GM12878 (cell line): ENCODE measurements at regions of chr1 and their contacts with region 1.

Region 1: GRCh38 chr1:235843461-235843961 is 23.2 kb downstream of the LYST start:
- DNase-seq: no peak
- ATAC-seq: peak; percentile 82
- H3K4me3 ChIP-seq: no peak overlapping the region
- H3K27ac ChIP-seq: no peak overlapping the region
- H3K4me1 ChIP-seq: peaks cover 7% of the 10 kb centered on the region
- H3K27me3 ChIP-seq: no peaks in the 10 kb centered on the region
- CTCF ChIP-seq: peak; percentile 66 to 75 (median 66)
- EP300 ChIP-seq: no peak
- POLR2A ChIP-seq: no peak
- RAD21 ChIP-seq: peak; percentile 69

Region 2: GRCh38 chr1:235504496-235505222 is 338.9 kb before region 1 on chr1:
- CTCF ChIA-PET with region 1: interaction called, 8 read pairs
- POLR2A ChIA-PET with region 1: interaction called, 13 read pairs
- RAD21 ChIA-PET with region 1: interaction called, 14 read pairs
- SMC1A ChIA-PET with region 1: interaction called, 6 read pairs
- in situ Hi-C with region 1: no loop called
- intact Hi-C with region 1: loop called (anchors 5 kb)
- DNase-seq: peak; percentile 96
- ATAC-seq: peak; percentile 86
- H3K4me3 ChIP-seq: peak overlapping the region; percentile 92
- H3K27ac ChIP-seq: peak overlapping the region; percentile 95
- H3K4me1 ChIP-seq: peaks cover 6% of the 10 kb centered on the region
- H3K27me3 ChIP-seq: no peaks in the 10 kb centered on the region
- CTCF ChIP-seq: peak; percentile 82 to 91 (median 86)
- EP300 ChIP-seq: peak in 1 of 2 experiments; percentile 51; a peak in 1 of 4 replicates
- POLR2A ChIP-seq: peak; percentile 86
- RAD21 ChIP-seq: peak; percentile 48; the same call in 1 of the 2 replicates

Region 3: DNA sequence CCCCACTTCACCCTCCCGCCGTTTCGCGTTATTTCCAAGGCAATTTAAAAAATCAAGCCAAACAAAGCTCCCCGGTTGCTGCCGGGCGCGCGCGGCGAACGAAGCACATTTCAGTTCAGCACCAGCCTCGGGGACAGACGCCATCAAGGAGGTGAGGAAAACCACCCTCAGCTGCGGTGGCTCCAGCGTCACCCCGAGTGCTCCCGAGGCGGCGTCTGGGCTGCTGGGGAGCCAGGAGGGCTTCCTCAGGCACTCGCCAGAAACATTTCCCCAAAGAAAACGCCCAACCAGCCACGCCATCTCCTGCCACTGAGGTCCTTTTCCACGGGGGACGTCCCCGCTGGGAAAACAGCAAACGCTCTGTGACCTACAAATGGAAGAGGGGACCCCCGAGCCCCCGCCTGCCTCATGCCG is 194.6 kb before region 1 on chr1:
- CTCF ChIA-PET with region 1: no interaction called
- POLR2A ChIA-PET with region 1: no interaction called
- RAD21 ChIA-PET with region 1: interaction called, 3 read pairs
- SMC1A ChIA-PET with region 1: no interaction called
- in situ Hi-C with region 1: no loop called
- intact Hi-C with region 1: loop called (anchors 5 kb)
- DNase-seq: no peak
- ATAC-seq: peak; percentile 82
- H3K4me3 ChIP-seq: peak overlapping the region; percentile 63; the same call in 1 of the 2 replicates
- H3K27ac ChIP-seq: no peak overlapping the region
- H3K4me1 ChIP-seq: no peaks in the 10 kb centered on the region; the same call in 1 of the 2 replicates
- H3K27me3 ChIP-seq: peaks cover 1 to 19% of the 10 kb centered on the region in 2 experiments; a peak in 3 of 4 replicates
- CTCF ChIP-seq: no peak
- EP300 ChIP-seq: no peak
- POLR2A ChIP-seq: no peak
- RAD21 ChIP-seq: no peak

Region 4: DNA sequence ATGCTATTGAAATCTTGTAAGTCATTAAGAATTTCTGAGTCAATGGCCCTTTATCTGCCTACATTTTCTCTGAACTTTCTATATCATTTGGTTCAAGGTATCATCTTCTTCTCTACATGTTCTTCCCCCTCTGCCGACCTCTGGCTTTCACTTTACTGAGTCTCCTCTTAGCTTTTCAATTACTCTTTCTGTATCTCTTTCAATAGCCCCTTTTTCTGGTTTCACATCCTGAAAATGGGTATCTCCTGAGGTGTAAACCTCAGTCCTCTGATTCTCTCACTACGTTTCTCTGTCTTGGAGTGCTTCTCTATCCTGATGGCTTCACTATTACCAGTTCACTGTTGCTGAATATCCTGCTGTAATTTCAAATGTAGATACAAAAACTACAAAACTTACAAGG is 75.7 kb before region 1 on chr1:
- CTCF ChIA-PET with region 1: interaction called, 8 read pairs
- POLR2A ChIA-PET with region 1: no interaction called
- RAD21 ChIA-PET with region 1: interaction called, 8 read pairs
- SMC1A ChIA-PET with region 1: interaction called, 15 read pairs
- in situ Hi-C with region 1: no loop called
- intact Hi-C with region 1: no loop called
- DNase-seq: peak; percentile 45
- ATAC-seq: peak; percentile 96
- H3K4me3 ChIP-seq: 0 out of 2 replicates have a peak overlapping the region, but pooled peaks have one; percentile 2
- H3K27ac ChIP-seq: no peak overlapping the region
- H3K4me1 ChIP-seq: peaks cover 9% of the 10 kb centered on the region
- H3K27me3 ChIP-seq: no peaks in the 10 kb centered on the region
- CTCF ChIP-seq: no peak
- EP300 ChIP-seq: no peak
- POLR2A ChIP-seq: no peak
- RAD21 ChIP-seq: no peak

Region 5: GRCh38 chr1:235821361-235821981 is 22.0 kb before region 1 on chr1:
- CTCF ChIA-PET with region 1: interaction called, 8 read pairs
- POLR2A ChIA-PET with region 1: no interaction called
- RAD21 ChIA-PET with region 1: interaction called, 5 read pairs
- SMC1A ChIA-PET with region 1: interaction called, 14 read pairs
- in situ Hi-C with region 1: no loop called
- intact Hi-C with region 1: no loop called
- DNase-seq: no peak
- ATAC-seq: no peak
- H3K4me3 ChIP-seq: no peak overlapping the region
- H3K27ac ChIP-seq: no peak overlapping the region
- H3K4me1 ChIP-seq: no peaks in the 10 kb centered on the region
- H3K27me3 ChIP-seq: no peaks in the 10 kb centered on the region
- CTCF ChIP-seq: no peak
- EP300 ChIP-seq: no peak
- POLR2A ChIP-seq: no peak
- RAD21 ChIP-seq: no peak

Region 6: DNA sequence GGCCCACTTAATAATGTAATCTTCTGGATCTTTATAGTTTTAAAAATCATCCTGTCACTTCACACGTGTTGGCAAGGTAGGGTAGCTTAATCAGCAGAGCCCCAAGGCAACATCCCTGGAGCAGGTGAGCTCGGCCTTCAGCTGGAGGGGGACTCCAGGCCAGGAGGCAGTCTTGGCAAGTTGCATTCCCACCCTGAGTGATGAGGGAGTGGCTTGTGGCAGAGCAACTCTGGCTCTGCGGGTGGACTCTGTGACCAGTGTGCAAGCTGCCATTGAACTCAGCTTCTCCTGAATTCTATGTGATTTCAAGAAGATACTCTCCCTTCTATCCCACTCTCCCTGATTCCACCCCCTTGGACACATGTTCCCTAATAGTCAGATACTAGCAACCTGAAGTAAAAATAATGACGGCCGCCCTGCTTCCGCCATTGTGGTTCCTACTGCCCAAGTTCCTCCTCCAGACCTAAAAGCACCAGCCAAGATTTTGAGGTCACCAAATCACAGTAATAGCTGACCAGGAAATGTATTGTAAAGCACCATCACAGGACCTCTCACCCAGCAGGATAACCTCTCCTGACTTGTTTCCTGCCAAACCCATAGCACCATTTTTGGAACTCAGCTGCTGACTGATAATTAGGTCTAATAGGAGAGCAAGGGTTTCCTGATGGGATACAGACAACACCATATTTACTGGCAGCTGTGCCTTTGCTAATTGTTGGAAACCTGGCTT is 34.7 kb after region 1 on chr1:
- CTCF ChIA-PET with region 1: interaction called, 10 read pairs
- POLR2A ChIA-PET with region 1: interaction called, 4 read pairs
- RAD21 ChIA-PET with region 1: interaction called, 9 read pairs
- SMC1A ChIA-PET with region 1: interaction called, 12 read pairs
- in situ Hi-C with region 1: no loop called
- intact Hi-C with region 1: no loop called
- DNase-seq: no peak
- ATAC-seq: no peak
- H3K4me3 ChIP-seq: peak overlapping the region; percentile 26; the same call in 1 of the 2 replicates
- H3K27ac ChIP-seq: no peak overlapping the region
- H3K4me1 ChIP-seq: peaks cover 26% of the 10 kb centered on the region
- H3K27me3 ChIP-seq: no peaks in the 10 kb centered on the region
- CTCF ChIP-seq: no peak
- EP300 ChIP-seq: no peak
- POLR2A ChIP-seq: no peak
- RAD21 ChIP-seq: no peak

Region 7: DNA sequence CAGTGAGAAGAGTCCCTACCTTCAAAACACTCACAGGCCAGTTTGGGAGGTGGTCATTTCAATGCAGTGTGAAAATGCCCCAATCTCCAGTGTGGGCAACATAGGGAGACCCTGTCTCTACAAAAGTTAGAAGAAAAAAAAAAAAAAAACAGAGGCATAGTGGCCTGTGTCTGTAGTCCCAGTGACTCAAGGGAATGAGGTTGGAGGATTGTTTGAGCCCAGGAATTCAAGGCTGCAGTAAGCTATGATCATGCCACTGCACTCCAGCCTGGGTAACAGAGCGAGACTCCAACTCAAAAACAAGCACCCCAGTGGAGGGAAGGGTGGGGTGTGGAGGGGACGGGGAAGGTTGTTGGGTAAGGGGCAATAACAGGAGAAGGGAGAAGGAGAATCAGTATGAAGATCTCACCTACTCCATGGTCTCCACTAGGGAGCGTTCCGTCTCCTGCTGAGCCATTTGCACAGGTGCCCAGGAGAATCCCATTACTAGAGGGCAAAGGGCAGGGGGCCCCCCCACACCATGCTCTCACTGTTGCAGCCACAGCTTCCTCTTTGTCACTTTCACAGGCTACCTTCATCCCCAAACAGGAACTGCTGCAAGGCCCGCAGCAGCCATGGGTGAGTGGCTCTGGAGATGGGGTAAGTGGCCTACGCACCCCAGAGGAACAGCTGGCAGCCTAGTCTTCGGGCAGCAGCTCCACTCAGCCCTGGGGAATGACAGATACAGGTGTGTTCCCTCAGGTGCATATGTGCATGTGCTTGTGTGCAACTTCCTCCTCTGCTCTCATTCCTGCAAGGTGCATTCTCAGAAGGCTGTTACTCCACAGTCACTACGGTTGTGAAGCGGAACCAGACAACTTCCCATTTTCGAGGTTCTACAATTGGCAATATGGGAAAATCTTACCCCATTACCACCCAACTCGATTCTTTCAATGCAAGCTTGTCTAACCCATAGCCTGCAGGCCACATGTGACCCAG is 111.1 kb after region 1 on chr1:
- CTCF ChIA-PET with region 1: interaction called, 7 read pairs
- POLR2A ChIA-PET with region 1: interaction called, 5 read pairs
- RAD21 ChIA-PET with region 1: interaction called, 9 read pairs
- SMC1A ChIA-PET with region 1: interaction called, 17 read pairs
- in situ Hi-C with region 1: no loop called
- intact Hi-C with region 1: no loop called
- DNase-seq: peak; percentile 87
- ATAC-seq: peak; percentile 94
- H3K4me3 ChIP-seq: no peak overlapping the region
- H3K27ac ChIP-seq: peak overlapping the region; percentile 73
- H3K4me1 ChIP-seq: peaks cover 37% of the 10 kb centered on the region
- H3K27me3 ChIP-seq: no peaks in the 10 kb centered on the region
- CTCF ChIP-seq: peak; percentile 27 to 35 (median 33); a peak in 4 of 6 replicates
- EP300 ChIP-seq: peak; percentile 80 to 93
- POLR2A ChIP-seq: no peak
- RAD21 ChIP-seq: peak; percentile 16

Region 8: GRCh38 chr1:236920286-236920894 is 1076.9 kb after region 1 on chr1:
- CTCF ChIA-PET with region 1: no interaction called
- POLR2A ChIA-PET with region 1: no interaction called
- RAD21 ChIA-PET with region 1: no interaction called
- SMC1A ChIA-PET with region 1: no interaction called
- in situ Hi-C with region 1: no loop called
- intact Hi-C with region 1: no loop called
- DNase-seq: no peak
- ATAC-seq: no peak
- H3K4me3 ChIP-seq: no peak overlapping the region
- H3K27ac ChIP-seq: no peak overlapping the region
- H3K4me1 ChIP-seq: no peaks in the 10 kb centered on the region
- H3K27me3 ChIP-seq: no peaks in the 10 kb centered on the region
- CTCF ChIP-seq: no peak
- EP300 ChIP-seq: no peak
- POLR2A ChIP-seq: no peak
- RAD21 ChIP-seq: no peak